ENCODE measurements at regions of chr6 and their contacts with region 1.

Region 1: GRCh38 chr6:89819336-89820130 is at the start of gene MDN1:
- DNase-seq: peak; percentile 73
- ATAC-seq: peak; percentile 95
- H3K4me3 ChIP-seq: peak within 1 kb of the TSS; percentile 80
- H3K27ac ChIP-seq: peak within 1 kb of the TSS; percentile 88
- H3K4me1 ChIP-seq: peaks cover 10% of the 10 kb centered on the region; the same call in 1 of the 2 replicates
- H3K27me3 ChIP-seq: no peaks in the 10 kb centered on the region
- CTCF ChIP-seq: no peak
- EP300 ChIP-seq: no peak
- POLR2A ChIP-seq: peak; percentile 97
- RAD21 ChIP-seq: no peak
- polyA plus RNA-seq, gene MDN1: 19.0 to 19.6 TPM

Region 2: GRCh38 chr6:89745716-89746115 is 73.8 kb before region 1 on chr6:
- CTCF ChIA-PET with region 1: no interaction called
- POLR2A ChIA-PET with region 1: no interaction called
- RAD21 ChIA-PET with region 1: no interaction called
- SMC1A ChIA-PET with region 1: no interaction called
- in situ Hi-C with region 1: no loop called
- intact Hi-C with region 1: no loop called
- DNase-seq: no peak
- ATAC-seq: no peak
- H3K4me3 ChIP-seq: no peak overlapping the region
- H3K27ac ChIP-seq: no peak overlapping the region
- H3K4me1 ChIP-seq: no peaks in the 10 kb centered on the region
- H3K27me3 ChIP-seq: no peaks in the 10 kb centered on the region
- CTCF ChIP-seq: no peak
- EP300 ChIP-seq: no peak
- POLR2A ChIP-seq: no peak
- RAD21 ChIP-seq: no peak

Region 3: GRCh38 chr6:89782222-89782621 is 37.3 kb before region 1 on chr6:
- CTCF ChIA-PET with region 1: no interaction called
- POLR2A ChIA-PET with region 1: no interaction called
- RAD21 ChIA-PET with region 1: no interaction called
- SMC1A ChIA-PET with region 1: no interaction called
- in situ Hi-C with region 1: no loop called
- intact Hi-C with region 1: no loop called
- DNase-seq: no peak
- ATAC-seq: no peak
- H3K4me3 ChIP-seq: no peak overlapping the region
- H3K27ac ChIP-seq: no peak overlapping the region
- H3K4me1 ChIP-seq: no peaks in the 10 kb centered on the region
- H3K27me3 ChIP-seq: no peaks in the 10 kb centered on the region
- CTCF ChIP-seq: no peak
- EP300 ChIP-seq: no peak
- POLR2A ChIP-seq: no peak
- RAD21 ChIP-seq: no peak

Region 4: DNA sequence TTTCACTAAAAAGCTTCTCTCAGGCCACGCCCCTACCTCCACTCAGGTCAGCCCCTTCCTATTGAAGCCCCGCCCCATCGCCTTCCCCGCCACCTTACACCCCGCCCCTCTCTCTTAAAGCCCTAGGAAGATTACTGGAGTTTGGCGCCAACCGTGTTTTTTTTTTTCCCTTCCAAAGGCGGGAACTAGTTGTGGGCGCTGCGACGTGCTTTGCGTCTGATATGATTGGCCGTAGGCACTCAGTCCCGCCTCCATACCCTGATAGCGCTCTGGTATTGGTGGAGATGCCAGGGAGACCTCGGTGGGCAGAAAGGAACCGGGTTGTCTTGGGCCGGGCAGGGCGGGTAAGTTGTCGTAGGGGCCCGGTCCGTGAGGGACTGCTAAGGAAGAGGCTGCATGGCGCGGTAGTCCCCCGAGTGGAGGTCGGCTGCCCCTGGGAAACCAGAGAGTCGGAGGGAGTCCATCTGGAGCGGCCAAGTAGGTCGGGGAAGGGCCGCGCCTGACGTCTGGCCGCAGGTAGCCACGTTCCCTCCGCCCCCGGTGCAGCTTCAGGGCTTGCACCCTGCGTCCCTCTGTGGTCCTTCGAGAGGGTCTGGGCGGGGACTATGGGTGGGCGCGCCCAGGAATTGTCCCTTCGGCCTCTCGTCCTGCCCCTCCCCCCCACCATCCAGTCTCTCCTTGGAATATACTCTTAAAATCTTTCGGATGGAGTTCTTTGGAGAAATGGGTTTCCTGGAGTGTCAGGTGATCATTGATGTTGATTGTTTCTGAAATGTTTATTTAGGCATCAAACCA is 10.3 kb after region 1 on chr6 and contains the start of gene CASP8AP2:
- CTCF ChIA-PET with region 1: interaction called, 34 read pairs
- POLR2A ChIA-PET with region 1: interaction called, 45 read pairs
- RAD21 ChIA-PET with region 1: interaction called, 20 read pairs
- SMC1A ChIA-PET with region 1: interaction called, 20 read pairs
- in situ Hi-C with region 1: no loop called
- intact Hi-C with region 1: loop called (anchors 1 kb)
- DNase-seq: peak; percentile 98
- ATAC-seq: peak; percentile 97
- H3K4me3 ChIP-seq: peak within 1 kb of the TSS; percentile 87
- H3K27ac ChIP-seq: peak within 1 kb of the TSS; percentile 85
- H3K4me1 ChIP-seq: peaks cover 14% of the 10 kb centered on the region
- H3K27me3 ChIP-seq: no peaks in the 10 kb centered on the region
- CTCF ChIP-seq: no peak
- EP300 ChIP-seq: no peak
- POLR2A ChIP-seq: peak; percentile 90
- RAD21 ChIP-seq: no peak
- polyA plus RNA-seq, gene CASP8AP2: 12.1 to 15.5 TPM

Region 5: DNA sequence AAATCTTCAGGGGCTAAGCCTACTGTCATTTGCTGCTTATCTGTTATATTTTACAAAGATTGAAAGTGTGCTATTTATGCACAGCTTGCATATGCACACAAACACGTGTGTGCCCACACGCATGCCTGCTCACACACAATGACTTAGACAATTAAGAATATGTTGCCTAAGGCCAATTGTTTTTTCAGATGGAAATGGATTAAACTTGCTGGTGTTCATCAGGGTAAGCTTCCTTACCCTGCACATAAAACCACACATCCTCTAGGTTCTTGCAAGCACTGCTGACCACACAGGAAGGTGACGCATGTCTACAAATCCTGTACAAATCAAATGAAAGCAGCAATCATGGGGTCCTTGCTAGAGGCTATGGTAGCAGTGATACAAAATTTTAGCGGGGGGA is 133.2 kb after region 1 on chr6:
- CTCF ChIA-PET with region 1: no interaction called
- POLR2A ChIA-PET with region 1: no interaction called
- RAD21 ChIA-PET with region 1: no interaction called
- SMC1A ChIA-PET with region 1: no interaction called
- in situ Hi-C with region 1: no loop called
- intact Hi-C with region 1: no loop called
- DNase-seq: no peak
- ATAC-seq: no peak; the same call in 2 of the 3 replicates
- H3K4me3 ChIP-seq: no peak overlapping the region
- H3K27ac ChIP-seq: no peak overlapping the region
- H3K4me1 ChIP-seq: no peaks in the 10 kb centered on the region
- H3K27me3 ChIP-seq: peaks cover 0 to 3% of the 10 kb centered on the region in 2 experiments; a peak in 1 of 4 replicates
- CTCF ChIP-seq: no peak
- EP300 ChIP-seq: no peak
- POLR2A ChIP-seq: no peak
- RAD21 ChIP-seq: no peak

Region 6: GRCh38 chr6:90905351-90905750 is 1085.8 kb after region 1 on chr6:
- CTCF ChIA-PET with region 1: no interaction called
- POLR2A ChIA-PET with region 1: no interaction called
- RAD21 ChIA-PET with region 1: no interaction called
- SMC1A ChIA-PET with region 1: no interaction called
- in situ Hi-C with region 1: no loop called
- intact Hi-C with region 1: no loop called
- DNase-seq: no peak
- ATAC-seq: no peak
- H3K4me3 ChIP-seq: no peak overlapping the region
- H3K27ac ChIP-seq: no peak overlapping the region
- H3K4me1 ChIP-seq: no peaks in the 10 kb centered on the region
- H3K27me3 ChIP-seq: no peaks in the 10 kb centered on the region
- CTCF ChIP-seq: no peak
- EP300 ChIP-seq: no peak
- POLR2A ChIP-seq: no peak
- RAD21 ChIP-seq: no peak